Transverse colon (tissue), 4 donors: ENCODE measurements at regions of chr10 and their contacts with region 1.

Region 1: GRCh38 chr10:6688661-6689435 is 108.8 kb upstream of the PRKCQ start:
- DNase-seq: no peak
- H3K4me3 ChIP-seq: no peak overlapping the region
- H3K27ac ChIP-seq: no peak overlapping the region
- H3K4me1 ChIP-seq: no peaks in the 10 kb centered on the region
- H3K27me3 ChIP-seq: no peaks in the 10 kb centered on the region
- CTCF ChIP-seq: no peak
- EP300 ChIP-seq: no peak
- POLR2A ChIP-seq: no peak

Region 2: GRCh38 chr10:5862360-5862961 is 826.4 kb before region 1 on chr10:
- in situ Hi-C with region 1: no loop called
- intact Hi-C with region 1: no loop called
- DNase-seq: peak; percentile 19
- H3K4me3 ChIP-seq: no peak overlapping the region
- H3K27ac ChIP-seq: peak overlapping the region in 1 of 4 donors; percentile 25
- H3K4me1 ChIP-seq: no peaks in the 10 kb centered on the region
- H3K27me3 ChIP-seq: no peaks in the 10 kb centered on the region
- CTCF ChIP-seq: no peak
- EP300 ChIP-seq: no peak
- POLR2A ChIP-seq: no peak

Region 3: DNA sequence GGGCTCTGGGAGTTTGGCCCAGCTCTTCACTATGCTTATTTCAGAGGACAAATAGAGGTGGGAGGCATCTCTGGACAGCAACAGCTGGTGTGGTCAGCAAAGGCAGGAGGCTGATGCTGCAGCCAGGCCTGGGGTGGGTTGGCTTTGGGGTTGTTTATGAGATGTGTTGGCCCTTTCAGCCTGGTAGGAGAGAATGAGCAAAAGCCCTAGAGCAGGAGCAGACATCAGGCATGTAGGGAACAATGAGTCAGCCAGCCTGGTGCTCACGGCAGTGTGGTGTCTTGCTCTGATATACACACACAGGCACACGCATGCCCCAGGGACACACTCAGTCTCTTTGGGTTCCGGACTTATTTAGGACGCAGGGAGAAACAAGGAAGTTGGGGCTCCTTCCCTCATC is 265.8 kb before region 1 on chr10:
- in situ Hi-C with region 1: loop called in 1 of 4 experiments (anchors 10 kb)
- intact Hi-C with region 1: no loop called
- DNase-seq: no peak
- H3K4me3 ChIP-seq: no peak overlapping the region
- H3K27ac ChIP-seq: no peak overlapping the region
- H3K4me1 ChIP-seq: no peaks in the 10 kb centered on the region
- H3K27me3 ChIP-seq: no peaks in the 10 kb centered on the region
- CTCF ChIP-seq: no peak
- EP300 ChIP-seq: no peak
- POLR2A ChIP-seq: no peak

Region 4: DNA sequence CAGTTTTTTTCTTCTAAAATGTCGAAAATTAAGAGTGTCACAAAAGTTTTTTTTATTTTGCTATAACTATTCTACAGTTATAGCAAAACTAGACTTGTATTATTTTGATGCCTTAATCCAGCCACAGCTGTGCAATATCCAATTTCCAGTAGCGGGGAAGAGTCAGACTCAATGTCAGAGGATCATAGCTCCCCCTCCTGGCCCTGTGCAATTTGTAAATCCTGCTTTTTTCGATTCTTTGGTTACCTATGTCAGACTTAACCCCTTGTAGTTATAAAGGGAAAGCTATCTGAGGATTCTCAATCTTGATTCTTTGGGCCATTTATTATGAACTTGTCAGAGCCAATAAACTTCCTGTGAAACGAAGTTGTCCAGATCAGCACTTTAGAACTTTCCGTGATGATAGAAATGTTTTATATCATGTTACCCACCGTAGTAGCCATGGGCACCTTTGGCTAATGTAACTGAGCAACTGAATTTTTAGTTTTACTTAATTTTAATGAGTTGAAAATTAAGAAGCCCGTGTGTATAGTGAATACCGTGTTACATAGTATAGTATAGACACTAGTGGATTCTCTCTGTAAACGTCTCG is 21.1 kb before region 1 on chr10:
- in situ Hi-C with region 1: no loop called
- intact Hi-C with region 1: no loop called
- DNase-seq: peak; percentile 9
- H3K4me3 ChIP-seq: no peak overlapping the region
- H3K27ac ChIP-seq: no peak overlapping the region
- H3K4me1 ChIP-seq: no peaks in the 10 kb centered on the region
- H3K27me3 ChIP-seq: peaks cover 13% of the 10 kb centered on the region
- CTCF ChIP-seq: peak; percentile 15 to 34 (median 18)
- EP300 ChIP-seq: no peak
- POLR2A ChIP-seq: no peak

Region 5: GRCh38 chr10:6811153-6811552 is 122.3 kb after region 1 on chr10:
- in situ Hi-C with region 1: no loop called
- intact Hi-C with region 1: no loop called
- DNase-seq: no peak
- H3K4me3 ChIP-seq: no peak overlapping the region
- H3K27ac ChIP-seq: no peak overlapping the region
- H3K4me1 ChIP-seq: no peaks in the 10 kb centered on the region
- H3K27me3 ChIP-seq: no peaks in the 10 kb centered on the region
- CTCF ChIP-seq: no peak
- EP300 ChIP-seq: no peak
- POLR2A ChIP-seq: no peak